Activated CD4-positive, alpha-beta T cell treated with anti-CD3 and anti-CD28 coated beads for 36 hours (primary cell): ENCODE measurements at regions of chr19 and their contacts with region 1.

Region 1: GRCh38 chr19:42244347-42245220 is 2.2 kb upstream of the GSK3A start:
- DNase-seq: peak; percentile 96
- ATAC-seq: peak; percentile 49
- H3K4me3 Mint-ChIP-seq: peak overlapping the region; percentile 93
- H3K27ac Mint-ChIP-seq: peak overlapping the region; percentile 94
- H3K4me1 Mint-ChIP-seq: peaks cover 42% of the 10 kb centered on the region
- H3K27me3 Mint-ChIP-seq: no peaks in the 10 kb centered on the region

Region 2: DNA sequence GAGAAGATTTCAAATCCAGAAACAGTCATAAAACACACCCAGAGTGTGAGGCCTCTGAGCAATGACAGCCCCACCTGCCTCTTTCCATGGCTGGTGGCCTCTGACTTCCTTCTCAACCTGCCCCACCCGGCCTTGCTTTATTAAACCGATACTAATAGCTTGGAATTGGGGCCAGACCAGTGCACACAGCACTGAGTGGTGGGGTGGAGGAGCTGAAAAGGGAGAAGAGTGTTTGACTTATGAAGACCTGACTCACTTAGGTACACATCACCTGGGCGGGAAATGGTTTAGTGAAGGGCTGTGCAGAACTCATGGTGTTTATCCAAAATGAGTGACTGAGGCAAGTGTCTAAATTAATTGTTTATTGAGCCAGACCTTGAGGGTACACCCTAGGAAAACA is 510.0 kb before region 1 on chr19:
- CTCF ChIA-PET with region 1: no interaction called
- POLR2A ChIA-PET with region 1: no interaction called
- intact Hi-C with region 1: no loop called
- DNase-seq: no peak
- ATAC-seq: no peak
- H3K4me3 Mint-ChIP-seq: no peak overlapping the region
- H3K27ac Mint-ChIP-seq: no peak overlapping the region
- H3K4me1 Mint-ChIP-seq: peaks cover 9% of the 10 kb centered on the region
- H3K27me3 Mint-ChIP-seq: peaks cover 53% of the 10 kb centered on the region

Region 3: GRCh38 chr19:41959056-41960053 is 285.2 kb before region 1 on chr19 and contains the start of gene RABAC1:
- CTCF ChIA-PET with region 1: no interaction called
- POLR2A ChIA-PET with region 1: no interaction called
- intact Hi-C with region 1: loop called in 1 of 2 experiments (anchors 1 kb)
- DNase-seq: peak; percentile 94
- ATAC-seq: peak; percentile 88
- H3K4me3 Mint-ChIP-seq: peak within 1 kb of the TSS; percentile 81
- H3K27ac Mint-ChIP-seq: peak within 1 kb of the TSS; percentile 87
- H3K4me1 Mint-ChIP-seq: peaks cover 16% of the 10 kb centered on the region
- H3K27me3 Mint-ChIP-seq: no peaks in the 10 kb centered on the region
- total RNA-seq, gene RABAC1: 35.3 to 49.7 TPM

Region 4: DNA sequence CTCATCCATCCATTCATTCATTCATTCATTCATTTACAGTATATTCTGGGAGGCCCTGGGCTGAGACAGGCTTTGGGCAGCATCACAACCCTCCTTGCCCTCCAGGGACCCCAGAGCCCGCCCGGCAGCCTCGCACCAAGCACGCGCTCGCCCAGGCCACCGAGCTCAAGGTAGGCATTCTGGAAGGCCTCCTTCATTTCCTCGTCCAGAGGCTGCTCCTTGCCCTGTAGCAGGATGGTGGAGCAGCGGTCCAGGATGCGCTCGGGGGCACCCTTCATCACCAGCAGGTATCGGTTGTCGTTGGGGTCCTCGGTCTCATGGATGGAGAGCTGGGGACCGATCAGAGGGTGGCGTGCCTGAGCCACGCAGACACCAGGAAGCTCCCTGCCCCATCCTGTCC is 266.1 kb before region 1 on chr19:
- CTCF ChIA-PET with region 1: no interaction called
- POLR2A ChIA-PET with region 1: no interaction called
- intact Hi-C with region 1: no loop called
- DNase-seq: no peak
- ATAC-seq: no peak
- H3K4me3 Mint-ChIP-seq: no peak overlapping the region
- H3K27ac Mint-ChIP-seq: no peak overlapping the region
- H3K4me1 Mint-ChIP-seq: no peaks in the 10 kb centered on the region
- H3K27me3 Mint-ChIP-seq: no peaks in the 10 kb centered on the region

Region 5: DNA sequence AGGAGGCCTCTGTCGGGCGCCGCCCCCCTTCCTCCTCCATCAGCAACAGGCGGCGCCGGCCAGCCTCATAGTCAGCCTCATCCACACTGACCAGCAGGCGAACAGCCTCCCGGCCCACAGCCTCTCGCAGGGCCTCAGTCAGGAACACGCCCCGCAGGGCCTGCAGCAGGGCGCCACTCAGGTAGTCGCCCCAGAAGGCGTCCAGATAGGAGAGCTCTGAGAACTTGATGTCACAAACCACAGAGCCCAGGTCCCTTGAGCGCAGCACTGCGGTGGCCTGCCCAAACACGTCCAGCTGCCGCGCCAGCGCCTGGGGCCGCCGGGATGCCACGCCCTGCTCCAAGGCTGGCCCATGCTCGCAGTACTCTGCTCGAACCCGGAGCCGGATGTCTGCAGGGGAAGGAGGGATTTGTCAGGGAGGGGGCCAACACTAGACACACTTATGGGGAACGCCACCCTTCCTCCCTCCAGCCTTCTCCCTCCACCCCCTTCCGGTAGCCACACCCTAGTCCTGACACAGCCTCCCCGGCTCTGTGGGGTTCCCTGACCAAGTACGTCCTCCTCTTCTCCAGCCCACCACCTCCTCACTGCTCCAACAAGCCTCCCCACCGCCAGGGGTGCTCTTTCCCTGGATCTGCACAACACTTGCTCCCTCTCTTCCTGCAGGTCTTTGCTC is 45.0 kb before region 1 on chr19:
- CTCF ChIA-PET with region 1: no interaction called
- POLR2A ChIA-PET with region 1: no interaction called
- intact Hi-C with region 1: loop called in 1 of 2 experiments (anchors 1 kb)
- DNase-seq: peak; percentile 83
- ATAC-seq: peak; percentile 69
- H3K4me3 Mint-ChIP-seq: peak overlapping the region; percentile 57
- H3K27ac Mint-ChIP-seq: peak overlapping the region; percentile 91
- H3K4me1 Mint-ChIP-seq: peaks cover 81% of the 10 kb centered on the region
- H3K27me3 Mint-ChIP-seq: no peaks in the 10 kb centered on the region

Region 6: GRCh38 chr19:42268704-42269477 is 24.3 kb after region 1 on chr19 and contains the start of gene CIC:
- CTCF ChIA-PET with region 1: interaction called, 12 read pairs
- POLR2A ChIA-PET with region 1: interaction called, 18 read pairs
- intact Hi-C with region 1: loop called (anchors 1 kb)
- DNase-seq: peak; percentile 100
- ATAC-seq: peak; percentile 87
- H3K4me3 Mint-ChIP-seq: no peak within 1 kb of the TSS
- H3K27ac Mint-ChIP-seq: peak within 1 kb of the TSS; percentile 97
- H3K4me1 Mint-ChIP-seq: peaks cover 24% of the 10 kb centered on the region
- H3K27me3 Mint-ChIP-seq: no peaks in the 10 kb centered on the region
- total RNA-seq, gene CIC: 62.8 to 66.3 TPM

Region 7: GRCh38 chr19:42301656-42302203 is 57.1 kb after region 1 on chr19 and contains the start of gene PRR19:
- CTCF ChIA-PET with region 1: interaction called, 4 read pairs
- POLR2A ChIA-PET with region 1: interaction called, 4 read pairs
- intact Hi-C with region 1: loop called (anchors 1 to 2 kb)
- DNase-seq: peak; percentile 50
- ATAC-seq: peak; percentile 25
- H3K4me3 Mint-ChIP-seq: peak within 1 kb of the TSS; percentile 83
- H3K27ac Mint-ChIP-seq: peak within 1 kb of the TSS; percentile 85
- H3K4me1 Mint-ChIP-seq: peaks cover 19% of the 10 kb centered on the region
- H3K27me3 Mint-ChIP-seq: no peaks in the 10 kb centered on the region
- total RNA-seq, gene PRR19: 0.63 to 1.0 TPM

Region 8: GRCh38 chr19:42657556-42657955 is 413.0 kb after region 1 on chr19:
- CTCF ChIA-PET with region 1: no interaction called
- POLR2A ChIA-PET with region 1: no interaction called
- intact Hi-C with region 1: no loop called
- DNase-seq: no peak
- ATAC-seq: peak; percentile 51
- H3K4me3 Mint-ChIP-seq: no peak overlapping the region
- H3K27ac Mint-ChIP-seq: no peak overlapping the region
- H3K4me1 Mint-ChIP-seq: no peaks in the 10 kb centered on the region
- H3K27me3 Mint-ChIP-seq: peaks cover 12% of the 10 kb centered on the region